ENCODE measurements at regions of chr17 and their contacts with region 1.

Region 1: GRCh38 chr17:28763804-28764266 is 20.0 kb downstream of the TRAF4 start:
- DNase-seq: no peak
- ATAC-seq: peak; percentile 83
- H3K4me3 ChIP-seq: no peak overlapping the region
- H3K27ac ChIP-seq: no peak overlapping the region
- H3K4me1 ChIP-seq: peaks cover 21% of the 10 kb centered on the region
- H3K27me3 ChIP-seq: no peaks in the 10 kb centered on the region
- CTCF ChIP-seq: peak; percentile 96

Region 2: GRCh38 chr17:28675980-28676379 is 87.9 kb before region 1 on chr17:
- intact Hi-C with region 1: no loop called
- DNase-seq: no peak
- ATAC-seq: no peak
- H3K4me3 ChIP-seq: no peak overlapping the region
- H3K27ac ChIP-seq: no peak overlapping the region
- H3K4me1 ChIP-seq: no peaks in the 10 kb centered on the region
- H3K27me3 ChIP-seq: no peaks in the 10 kb centered on the region
- CTCF ChIP-seq: peak; percentile 8

Region 3: DNA sequence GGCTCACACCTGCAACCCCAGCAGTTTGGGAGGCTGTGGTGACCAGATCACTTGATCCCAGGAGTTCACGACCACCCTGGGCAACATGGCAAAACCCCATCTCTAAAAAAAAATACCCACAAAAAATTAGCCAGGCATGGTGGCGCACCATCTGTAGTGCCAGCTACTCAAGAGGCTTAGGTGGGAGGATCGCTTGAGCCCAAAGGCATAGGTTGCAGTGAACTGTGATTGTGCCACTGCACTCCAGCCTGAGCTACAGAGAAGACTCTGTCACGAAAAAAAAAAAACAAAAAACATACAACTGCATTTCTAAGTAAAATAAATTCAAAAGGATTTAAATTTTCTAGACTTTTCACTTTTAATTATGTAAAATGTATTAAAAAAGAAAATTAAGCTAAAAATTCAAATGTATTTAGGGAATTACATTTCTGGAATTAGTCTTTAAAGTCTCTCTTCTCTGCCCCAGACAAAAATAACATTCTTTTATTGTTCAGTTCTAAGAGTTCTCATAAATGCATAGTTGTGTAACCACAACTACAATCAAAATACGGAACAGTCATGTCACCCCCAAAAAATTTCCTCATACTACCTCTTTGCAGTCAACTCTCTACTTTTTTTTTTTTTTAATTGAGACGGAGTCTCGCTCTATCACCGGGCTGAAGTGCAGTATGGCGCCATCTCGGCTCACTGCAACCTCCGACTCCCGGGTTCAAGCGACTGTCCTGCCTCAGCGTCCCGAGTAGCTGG is 64.6 kb after region 1 on chr17:
- intact Hi-C with region 1: no loop called
- DNase-seq: peak; percentile 25
- ATAC-seq: no peak
- H3K4me3 ChIP-seq: no peak overlapping the region
- H3K27ac ChIP-seq: no peak overlapping the region
- H3K4me1 ChIP-seq: no peaks in the 10 kb centered on the region
- H3K27me3 ChIP-seq: no peaks in the 10 kb centered on the region
- CTCF ChIP-seq: no peak

Region 4: GRCh38 chr17:28878981-28879380 is 115.1 kb after region 1 on chr17:
- intact Hi-C with region 1: no loop called
- DNase-seq: no peak
- ATAC-seq: peak; percentile 48
- H3K4me3 ChIP-seq: no peak overlapping the region
- H3K27ac ChIP-seq: no peak overlapping the region
- H3K4me1 ChIP-seq: no peaks in the 10 kb centered on the region
- H3K27me3 ChIP-seq: no peaks in the 10 kb centered on the region
- CTCF ChIP-seq: peak; percentile 5

Region 5: GRCh38 chr17:28916302-28916934 is 152.6 kb after region 1 on chr17:
- intact Hi-C with region 1: loop called (anchors 10 kb)
- DNase-seq: peak; percentile 69
- ATAC-seq: peak; percentile 77
- H3K4me3 ChIP-seq: no peak overlapping the region
- H3K27ac ChIP-seq: no peak overlapping the region
- H3K4me1 ChIP-seq: peaks cover 20% of the 10 kb centered on the region
- H3K27me3 ChIP-seq: no peaks in the 10 kb centered on the region
- CTCF ChIP-seq: peak; percentile 72

Measured in upper lobe of right lung (tissue), 1 donor.